Panc1 (cell line): ENCODE measurements at regions of chr2 and their contacts with region 1.

Region 1: DNA sequence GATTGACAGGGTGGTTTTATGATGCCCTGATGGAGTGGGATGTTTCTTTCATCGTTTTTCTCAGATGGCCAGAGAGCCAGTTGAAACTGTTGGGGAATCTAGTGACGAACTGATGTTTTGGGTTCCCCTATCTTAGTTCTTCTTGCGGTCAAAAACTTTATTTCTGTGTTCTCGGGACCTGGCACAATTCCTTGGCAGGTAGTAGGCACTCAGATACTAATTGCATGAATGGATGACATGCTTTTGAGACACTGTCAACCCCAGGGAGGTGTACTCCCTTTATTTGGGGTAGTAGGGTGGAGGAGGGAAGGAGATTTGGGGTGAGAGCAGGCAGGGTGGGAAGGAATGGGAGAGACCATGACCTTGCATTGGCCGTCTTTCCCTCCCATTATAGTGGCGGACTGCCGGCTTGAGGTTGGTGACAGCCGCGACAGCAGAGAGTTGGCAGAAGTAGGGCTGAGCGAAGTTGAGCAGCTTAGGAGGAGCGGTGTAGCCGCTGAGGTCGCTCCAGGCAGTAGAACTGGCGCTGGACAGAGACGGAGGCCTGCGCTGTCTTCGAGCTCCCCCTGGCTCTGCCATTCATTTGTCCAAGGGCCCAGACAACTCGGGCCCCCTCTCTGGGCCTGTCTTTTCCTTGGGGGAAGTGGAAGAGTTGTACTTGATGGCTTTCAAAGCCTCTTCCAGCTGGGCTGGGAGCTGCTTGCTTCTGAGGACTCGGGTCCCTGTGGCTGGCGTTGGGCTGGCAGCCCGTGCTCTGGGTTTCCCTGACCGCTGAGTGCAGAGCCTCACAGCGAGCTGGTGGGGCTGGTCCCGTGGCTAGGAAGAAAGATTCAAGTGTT is 2.6 kb downstream of the TET3 start:
- DNase-seq: no peak
- ATAC-seq: peak; percentile 81
- H3K4me3 ChIP-seq: peak overlapping the region; percentile 35 to 64
- H3K27ac ChIP-seq: peak overlapping the region; percentile 48; the same call in 1 of the 2 replicates
- H3K4me1 ChIP-seq: peaks cover 47% of the 10 kb centered on the region
- H3K27me3 ChIP-seq: no peaks in the 10 kb centered on the region
- CTCF ChIP-seq: peak; percentile 55; the same call in 1 of the 2 replicates

Region 2: DNA sequence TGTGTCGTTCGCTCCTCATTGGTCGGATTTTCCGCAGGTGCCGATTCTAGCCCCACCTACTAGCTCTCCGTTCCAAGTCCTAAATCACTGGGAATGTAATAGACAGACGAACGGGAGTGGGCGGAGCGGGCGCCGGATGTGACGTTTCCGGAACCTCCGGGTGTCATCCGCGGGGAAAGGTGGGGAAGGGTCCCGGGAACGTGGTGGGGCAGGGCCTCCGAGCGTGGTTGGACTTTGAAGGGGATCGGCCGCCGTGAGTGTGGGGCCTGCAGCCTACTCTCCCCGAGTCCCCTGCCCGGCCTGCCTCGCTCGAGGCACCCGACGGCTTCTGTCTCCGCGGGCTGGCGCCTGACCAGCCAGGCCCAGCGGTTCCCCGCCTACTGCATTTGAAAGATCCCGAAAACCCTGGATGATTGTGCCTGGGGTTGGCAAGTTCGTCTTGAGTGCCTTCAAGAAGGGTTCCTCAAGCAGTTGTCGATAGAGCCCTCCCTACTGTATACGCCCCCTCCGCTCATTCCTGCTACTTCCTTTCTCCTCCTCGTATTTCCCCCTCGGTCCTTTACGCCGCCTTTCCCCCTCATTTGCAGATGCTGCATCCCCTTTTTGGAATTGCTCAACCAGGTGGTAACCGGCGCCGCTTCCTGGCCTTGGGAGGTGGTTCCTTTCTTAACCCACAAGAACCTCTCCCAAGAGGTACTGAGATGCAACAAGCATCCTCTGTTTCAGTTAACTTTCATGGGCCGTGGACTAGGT is 158.3 kb before region 1 on chr2 and contains the start of gene STAMBP:
- CTCF ChIA-PET with region 1: interaction called, 13 read pairs
- POLR2A ChIA-PET with region 1: no interaction called
- in situ Hi-C with region 1: no loop called
- intact Hi-C with region 1: no loop called
- DNase-seq: peak; percentile 91
- ATAC-seq: peak; percentile 98
- H3K4me3 ChIP-seq: peak within 1 kb of the TSS; percentile 72 to 85
- H3K27ac ChIP-seq: peak within 1 kb of the TSS; percentile 90
- H3K4me1 ChIP-seq: peaks cover 14% of the 10 kb centered on the region
- H3K27me3 ChIP-seq: no peaks in the 10 kb centered on the region
- CTCF ChIP-seq: no peak
- total RNA-seq, gene STAMBP: 49.0 TPM

Region 3: GRCh38 chr2:73944714-73945113 is 42.6 kb before region 1 on chr2:
- CTCF ChIA-PET with region 1: no interaction called
- POLR2A ChIA-PET with region 1: no interaction called
- in situ Hi-C with region 1: no loop called
- intact Hi-C with region 1: no loop called
- DNase-seq: no peak
- ATAC-seq: no peak
- H3K4me3 ChIP-seq: no peak overlapping the region
- H3K27ac ChIP-seq: no peak overlapping the region
- H3K4me1 ChIP-seq: no peaks in the 10 kb centered on the region
- H3K27me3 ChIP-seq: no peaks in the 10 kb centered on the region
- CTCF ChIP-seq: no peak

Region 4: DNA sequence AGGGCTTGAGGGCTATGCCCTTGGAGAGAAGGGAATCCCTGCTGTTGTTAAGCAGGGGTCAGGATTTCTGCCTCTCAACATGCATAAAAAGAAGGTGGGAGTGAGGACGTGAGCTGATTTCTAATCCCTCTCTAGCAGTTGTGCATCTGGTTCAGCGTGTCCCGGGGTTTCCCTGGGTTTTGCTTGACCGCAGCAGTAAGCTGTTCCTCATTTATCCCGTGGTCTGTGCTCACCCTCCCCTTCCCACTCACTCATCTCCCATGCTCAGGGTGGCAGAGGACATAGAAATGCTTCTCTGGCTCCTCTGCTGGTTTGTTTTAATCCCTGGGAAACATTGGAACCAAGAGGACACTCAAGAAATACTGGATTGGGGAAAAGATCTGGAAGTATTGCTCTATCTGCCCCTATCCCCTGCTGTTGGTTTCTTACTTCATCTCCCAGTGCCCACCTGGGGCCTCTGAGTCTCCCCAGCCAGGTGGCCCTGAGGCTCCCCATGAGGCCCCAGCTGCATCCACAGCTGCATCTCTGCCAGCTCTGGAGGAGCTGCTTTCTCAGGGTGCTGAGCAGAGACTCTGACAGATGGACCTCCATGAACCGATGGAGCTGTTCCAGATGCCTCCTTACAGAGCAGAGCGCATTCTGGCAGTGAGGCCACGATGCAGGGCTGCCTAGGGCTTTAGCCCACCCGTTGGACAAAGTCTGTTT is 33.5 kb after region 1 on chr2:
- CTCF ChIA-PET with region 1: no interaction called
- POLR2A ChIA-PET with region 1: interaction called, 13 read pairs
- in situ Hi-C with region 1: no loop called
- intact Hi-C with region 1: no loop called
- DNase-seq: no peak
- ATAC-seq: 0 out of 2 replicates have a peak, but pooled peaks have one; percentile 40
- H3K4me3 ChIP-seq: no peak overlapping the region
- H3K27ac ChIP-seq: no peak overlapping the region
- H3K4me1 ChIP-seq: no peaks in the 10 kb centered on the region
- H3K27me3 ChIP-seq: no peaks in the 10 kb centered on the region
- CTCF ChIP-seq: no peak

Region 5: GRCh38 chr2:74119912-74120825 is 132.8 kb after region 1 on chr2:
- CTCF ChIA-PET with region 1: no interaction called
- POLR2A ChIA-PET with region 1: interaction called, 11 read pairs
- in situ Hi-C with region 1: no loop called
- intact Hi-C with region 1: no loop called
- DNase-seq: peak; percentile 43
- ATAC-seq: peak; percentile 97
- H3K4me3 ChIP-seq: peak overlapping the region; percentile 63 to 71
- H3K27ac ChIP-seq: peak overlapping the region; percentile 80
- H3K4me1 ChIP-seq: no peaks in the 10 kb centered on the region; the same call in 1 of the 2 replicates
- H3K27me3 ChIP-seq: no peaks in the 10 kb centered on the region
- CTCF ChIP-seq: peak; percentile 81